ENCODE measurements at regions of chr12 and their contacts with region 1.

Region 1: DNA sequence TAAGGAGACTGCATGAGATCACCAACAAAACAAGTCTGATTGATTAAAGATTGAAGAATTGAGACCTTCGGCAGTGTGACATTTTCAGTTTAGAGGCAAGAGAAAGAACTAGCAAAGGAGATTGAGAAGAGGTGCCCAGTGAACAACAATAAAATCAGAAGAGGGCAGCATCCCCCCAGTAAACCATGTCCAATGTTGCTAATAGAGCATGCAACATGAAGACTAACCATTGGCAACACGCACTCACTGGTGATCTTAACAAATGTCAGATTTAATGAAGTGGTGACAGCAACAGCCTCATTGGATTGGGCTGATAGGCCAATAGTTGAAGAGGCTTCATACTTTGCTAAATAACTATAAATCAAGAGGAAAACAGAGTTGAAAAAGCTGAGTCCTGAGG is 20.7 kb upstream of the TAS2R14 start:
- DNase-seq: no peak
- ATAC-seq: no peak
- H3K4me3 ChIP-seq: no peak overlapping the region
- H3K27ac ChIP-seq: no peak overlapping the region
- H3K4me1 ChIP-seq: no peaks in the 10 kb centered on the region
- H3K27me3 ChIP-seq: no peaks in the 10 kb centered on the region
- CTCF ChIP-seq: 0 out of 2 replicates have a peak, but pooled peaks have one; percentile 5

Region 2: GRCh38 chr12:11130382-11130781 is 170.6 kb after region 1 on chr12:
- CTCF ChIA-PET with region 1: no interaction called
- POLR2A ChIA-PET with region 1: no interaction called
- in situ Hi-C with region 1: no loop called
- intact Hi-C with region 1: no loop called
- DNase-seq: no peak
- ATAC-seq: no peak
- H3K4me3 ChIP-seq: no peak overlapping the region
- H3K27ac ChIP-seq: no peak overlapping the region
- H3K4me1 ChIP-seq: no peaks in the 10 kb centered on the region
- H3K27me3 ChIP-seq: no peaks in the 10 kb centered on the region
- CTCF ChIP-seq: no peak

Region 3: GRCh38 chr12:11150832-11151231 is 191.0 kb after region 1 on chr12:
- CTCF ChIA-PET with region 1: no interaction called
- POLR2A ChIA-PET with region 1: no interaction called
- in situ Hi-C with region 1: no loop called
- intact Hi-C with region 1: no loop called
- DNase-seq: no peak
- ATAC-seq: no peak
- H3K4me3 ChIP-seq: no peak overlapping the region
- H3K27ac ChIP-seq: no peak overlapping the region
- H3K4me1 ChIP-seq: no peaks in the 10 kb centered on the region
- H3K27me3 ChIP-seq: no peaks in the 10 kb centered on the region
- CTCF ChIP-seq: no peak

Region 4: DNA sequence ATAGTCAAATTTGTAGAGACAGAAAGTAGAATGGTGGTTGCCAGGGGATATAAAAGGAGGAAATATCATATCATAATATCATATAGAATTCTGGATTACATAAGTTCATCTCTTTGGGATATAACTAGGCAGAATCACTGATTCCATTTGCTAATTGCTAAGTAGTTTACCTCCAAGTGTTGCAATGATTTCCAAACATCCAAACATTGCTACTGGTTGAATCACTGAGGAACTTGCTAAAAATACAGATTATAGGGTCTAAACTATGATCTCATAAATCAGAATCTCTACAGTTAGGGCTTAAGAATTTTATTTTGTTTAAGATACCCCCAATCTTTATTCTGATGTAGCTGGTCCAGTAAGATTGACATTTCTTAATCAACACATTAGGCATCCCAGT is 243.0 kb after region 1 on chr12:
- CTCF ChIA-PET with region 1: no interaction called
- POLR2A ChIA-PET with region 1: no interaction called
- in situ Hi-C with region 1: no loop called
- intact Hi-C with region 1: loop called (anchors 5 kb)
- DNase-seq: no peak
- ATAC-seq: no peak
- H3K4me3 ChIP-seq: no peak overlapping the region
- H3K27ac ChIP-seq: no peak overlapping the region
- H3K4me1 ChIP-seq: no peaks in the 10 kb centered on the region
- H3K27me3 ChIP-seq: no peaks in the 10 kb centered on the region
- CTCF ChIP-seq: no peak

Region 5: GRCh38 chr12:11252098-11252497 is 292.3 kb after region 1 on chr12:
- CTCF ChIA-PET with region 1: no interaction called
- POLR2A ChIA-PET with region 1: no interaction called
- in situ Hi-C with region 1: no loop called
- intact Hi-C with region 1: no loop called
- DNase-seq: no peak
- ATAC-seq: no peak
- H3K4me3 ChIP-seq: no peak overlapping the region
- H3K27ac ChIP-seq: no peak overlapping the region
- H3K4me1 ChIP-seq: no peaks in the 10 kb centered on the region
- H3K27me3 ChIP-seq: no peaks in the 10 kb centered on the region
- CTCF ChIP-seq: no peak

Measured in Panc1 (cell line).